ENCODE measurements at regions of chr17 and their contacts with region 1.

Region 1: DNA sequence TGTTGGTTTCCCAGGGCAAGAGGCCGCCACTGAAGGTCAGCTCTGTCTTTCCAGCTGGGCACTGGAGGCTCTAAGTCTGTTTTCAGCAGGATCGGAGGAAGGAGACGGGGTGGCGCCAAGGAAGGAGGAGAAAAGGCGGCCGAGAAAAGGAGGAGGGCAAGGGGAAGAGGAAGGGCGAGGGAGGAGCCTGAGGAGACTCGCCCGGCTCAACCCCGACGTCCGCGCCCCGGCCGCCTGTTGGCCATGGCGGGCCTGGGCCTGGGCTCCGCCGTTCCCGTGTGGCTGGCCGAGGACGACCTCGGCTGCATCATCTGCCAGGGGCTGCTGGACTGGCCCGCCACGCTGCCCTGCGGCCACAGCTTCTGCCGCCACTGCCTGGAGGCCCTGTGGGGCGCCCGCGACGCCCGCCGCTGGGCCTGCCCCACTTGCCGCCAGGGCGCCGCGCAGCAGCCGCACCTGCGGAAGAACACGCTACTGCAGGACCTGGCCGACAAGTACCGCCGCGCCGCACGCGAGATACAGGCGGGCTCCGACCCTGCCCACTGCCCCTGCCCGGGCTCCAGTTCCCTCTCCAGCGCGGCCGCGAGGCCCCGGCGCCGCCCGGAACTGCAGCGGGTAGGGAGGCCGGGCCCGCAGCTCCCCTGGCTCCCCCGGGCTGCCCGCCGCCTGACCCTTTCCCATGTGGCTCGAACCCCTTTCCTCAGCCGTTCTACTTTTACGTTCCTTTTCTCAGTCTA is at the start of gene RNF135:
- DNase-seq: peak in 8 of 10 donors; percentile 24 to 72 (median 46)
- H3K4me3 ChIP-seq: peak within 1 kb of the TSS; percentile 49 to 79 (median 69)
- H3K27ac ChIP-seq: peak within 1 kb of the TSS in 58 of 59 donors; percentile 34 to 95 (median 83)
- H3K27me3 ChIP-seq: peaks cover 0 to 20% (median 0%) of the 10 kb centered on the region in 45 donors
- CTCF ChIP-seq: peak in 32 of 56 donors; percentile 6 to 46 (median 24)
- total RNA-seq, gene RNF135: 1.7 to 12.4 (median 5.5) TPM

Region 2: DNA sequence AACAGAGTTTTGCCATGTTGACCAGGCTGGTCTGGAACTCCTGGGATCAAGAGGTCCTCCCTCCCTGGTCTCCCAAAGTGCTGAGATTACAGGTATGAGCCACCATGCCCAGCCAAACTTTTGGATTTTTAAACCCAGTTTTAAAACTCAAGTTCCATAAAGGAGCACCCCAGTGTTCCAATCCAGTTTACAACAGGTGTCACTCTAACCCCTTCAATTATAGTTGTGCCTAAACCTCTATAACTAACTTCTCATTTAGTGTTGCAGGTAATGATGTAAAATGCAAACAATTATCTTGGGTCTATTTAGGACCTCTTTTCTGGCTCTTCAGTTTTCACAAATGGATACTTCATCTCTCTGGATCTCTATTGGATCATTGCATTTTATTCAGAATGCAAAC is 57.0 kb before region 1 on chr17:
- intact Hi-C with region 1: loop called in 1 of 2 experiments (anchors 10 kb)
- DNase-seq: no peak
- H3K4me3 ChIP-seq: no peak overlapping the region
- H3K27ac ChIP-seq: no peak overlapping the region
- H3K27me3 ChIP-seq: no peaks in the 10 kb centered on the region
- CTCF ChIP-seq: no peak

Region 3: DNA sequence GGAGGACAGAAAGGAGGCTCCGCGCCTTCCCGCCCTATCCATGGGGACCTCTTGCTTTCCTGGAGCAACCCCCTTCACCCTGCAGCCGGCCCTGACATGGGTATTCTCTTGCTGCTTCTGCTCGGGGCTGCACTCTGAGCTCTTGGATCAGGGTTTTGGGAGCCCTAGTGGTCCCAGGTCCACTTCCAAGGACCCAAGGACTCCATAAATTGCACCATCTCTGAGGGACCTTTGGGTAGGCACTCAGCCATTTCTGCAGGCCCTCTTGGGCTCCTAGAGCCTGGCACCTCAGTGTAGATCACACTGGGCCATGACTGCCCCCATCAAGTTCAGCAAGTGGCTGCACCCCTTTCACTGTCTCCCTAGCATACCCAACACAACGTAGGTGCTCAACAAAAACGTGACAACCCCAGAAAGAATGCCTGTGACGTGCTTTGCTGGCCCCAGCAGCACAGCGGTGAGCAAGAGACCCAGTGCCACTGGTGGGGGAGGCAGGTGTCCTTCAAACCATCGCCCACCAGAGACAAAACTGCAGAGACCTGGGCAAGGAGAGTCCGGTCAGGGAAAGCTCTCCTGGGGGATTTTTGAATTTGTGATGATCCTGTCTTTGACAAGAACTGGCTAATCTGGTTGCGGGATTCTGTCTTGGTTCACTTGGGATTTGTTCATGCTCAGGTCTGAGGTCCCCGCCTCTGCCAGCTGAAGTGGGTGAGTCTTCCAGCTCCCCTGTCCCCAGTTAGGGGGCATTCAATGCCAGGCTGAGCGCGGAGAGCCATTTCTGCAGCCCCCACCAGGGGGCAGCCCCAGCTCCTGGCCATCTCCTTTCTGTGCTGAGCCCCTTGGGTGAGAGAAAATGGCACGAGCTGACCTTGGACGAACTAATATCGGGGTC is 418.0 kb after region 1 on chr17:
- intact Hi-C with region 1: no loop called
- DNase-seq: peak in 6 of 10 donors; percentile 49 to 79 (median 60)
- H3K4me3 ChIP-seq: peak overlapping the region in 1 of 59 donors; percentile 18
- H3K27ac ChIP-seq: peak overlapping the region in 33 of 59 donors; percentile 2 to 91 (median 59)
- H3K27me3 ChIP-seq: peaks cover 0 to 6% (median 0%) of the 10 kb centered on the region in 45 donors
- CTCF ChIP-seq: peak; percentile 55 to 89 (median 80)

Measured in dorsolateral prefrontal cortex (tissue), 120 donors.